ENCODE measurements at regions of chr6 and their contacts with region 1.

Region 1: GRCh38 chr6:11496152-11497060 is 41.1 kb upstream of the TMEM170B start:
- DNase-seq: peak; percentile 37
- H3K4me3 ChIP-seq: no peak overlapping the region
- CTCF ChIP-seq: peak; percentile 68

Region 2: DNA sequence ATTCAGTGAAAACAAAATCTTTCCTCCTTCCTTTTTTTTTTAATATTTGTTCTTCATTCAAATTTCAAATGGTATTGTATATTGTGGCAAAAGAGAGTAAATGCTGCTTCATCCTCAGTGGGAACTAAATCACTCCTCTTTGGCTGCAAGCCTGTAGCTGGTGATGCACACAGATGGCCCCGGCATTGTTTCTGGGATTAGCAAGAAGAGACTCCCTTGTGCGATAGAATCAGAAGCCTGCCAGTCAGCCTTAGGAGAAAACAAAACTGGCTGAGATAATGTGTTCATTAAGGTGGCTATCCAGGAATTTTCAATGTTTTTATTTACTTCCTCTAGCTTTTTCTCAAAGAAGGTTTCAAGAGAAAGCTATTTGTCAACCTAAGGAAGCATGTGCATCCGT is 431.6 kb before region 1 on chr6:
- CTCF ChIA-PET with region 1: interaction called, 45 read pairs
- POLR2A ChIA-PET with region 1: no interaction called
- DNase-seq: no peak
- H3K4me3 ChIP-seq: no peak overlapping the region
- CTCF ChIP-seq: no peak

Region 3: GRCh38 chr6:11111769-11112437 is 384.5 kb before region 1 on chr6:
- CTCF ChIA-PET with region 1: interaction called, 12 read pairs
- POLR2A ChIA-PET with region 1: no interaction called
- DNase-seq: no peak
- H3K4me3 ChIP-seq: no peak overlapping the region
- CTCF ChIP-seq: no peak

Region 4: GRCh38 chr6:11155589-11155988 is 340.8 kb before region 1 on chr6:
- CTCF ChIA-PET with region 1: interaction called, 13 read pairs
- POLR2A ChIA-PET with region 1: no interaction called
- DNase-seq: no peak
- H3K4me3 ChIP-seq: no peak overlapping the region
- CTCF ChIP-seq: no peak

Region 5: DNA sequence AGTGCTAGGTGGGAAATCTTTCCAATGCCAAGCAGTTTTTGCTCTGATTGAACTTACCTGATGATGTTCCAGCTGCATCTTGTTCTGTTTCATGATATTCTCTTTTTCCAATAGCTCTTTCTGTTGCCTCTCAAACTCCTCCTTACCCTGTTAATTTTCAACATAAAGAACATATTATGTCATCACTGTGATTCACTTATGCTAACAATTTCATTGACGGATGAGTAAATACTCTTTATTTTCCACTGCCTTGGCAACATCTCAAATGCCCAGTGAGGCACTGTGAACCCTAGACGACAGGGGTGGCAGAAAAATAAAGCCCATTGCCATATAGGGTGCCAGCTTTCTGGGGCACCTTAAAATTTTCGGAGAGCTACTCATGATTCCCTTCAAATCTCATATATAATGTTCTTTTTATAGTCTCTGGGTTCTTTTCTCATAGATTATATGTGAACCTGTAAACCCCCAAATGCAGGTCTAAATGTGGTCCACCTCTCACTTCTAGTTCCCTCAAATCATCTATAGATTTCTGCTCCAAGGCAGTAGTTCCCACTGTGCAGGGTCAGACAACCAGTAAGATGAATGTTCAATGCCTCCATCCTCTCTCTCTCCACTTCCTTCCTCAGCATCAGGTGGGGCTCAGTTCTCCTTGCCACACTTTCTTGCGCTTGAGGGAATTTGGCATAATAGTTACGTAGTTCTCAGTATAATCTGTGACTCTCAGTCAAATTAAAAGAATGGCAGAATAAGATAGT is 308.1 kb before region 1 on chr6:
- CTCF ChIA-PET with region 1: interaction called, 39 read pairs
- POLR2A ChIA-PET with region 1: interaction called, 3 read pairs
- DNase-seq: no peak
- H3K4me3 ChIP-seq: no peak overlapping the region
- CTCF ChIP-seq: no peak

Region 6: GRCh38 chr6:11241793-11242201 is 254.6 kb before region 1 on chr6:
- CTCF ChIA-PET with region 1: interaction called, 19 read pairs
- POLR2A ChIA-PET with region 1: no interaction called
- DNase-seq: no peak
- H3K4me3 ChIP-seq: no peak overlapping the region
- CTCF ChIP-seq: peak; percentile 6

Region 7: DNA sequence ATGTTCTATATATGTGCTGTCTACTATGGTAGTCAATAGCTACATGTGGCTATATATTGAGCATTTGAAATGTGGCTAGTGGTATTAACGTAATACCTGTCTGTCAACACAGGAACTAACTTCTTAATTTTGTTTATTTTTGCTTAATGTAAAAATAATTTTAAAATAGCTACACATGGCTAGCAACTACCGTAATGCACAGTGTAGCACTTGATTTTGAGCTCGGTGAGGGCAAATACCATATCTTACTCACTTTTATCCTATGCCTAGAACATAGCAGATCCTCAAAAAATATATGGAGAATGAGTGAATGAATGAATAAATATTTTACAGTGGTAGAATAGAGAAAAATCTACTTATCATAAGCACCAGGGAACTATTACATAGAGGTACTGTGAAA is 13.1 kb after region 1 on chr6:
- CTCF ChIA-PET with region 1: interaction called, 10 read pairs
- POLR2A ChIA-PET with region 1: no interaction called
- DNase-seq: no peak
- H3K4me3 ChIP-seq: no peak overlapping the region
- CTCF ChIP-seq: no peak

Measured in AG04449 (cell line).